ENCODE measurements at regions of chr22 and their contacts with region 1.

Region 1: GRCh38 chr22:38114484-38115398 is 4.3 kb upstream of the BAIAP2L2 start:
- DNase-seq: peak; percentile 93
- CTCF ChIP-seq: peak; percentile 83

Region 2: GRCh38 chr22:38228873-38229740 is 114.4 kb after region 1 on chr22:
- in situ Hi-C with region 1: loop called (anchors 10 kb)
- DNase-seq: no peak
- CTCF ChIP-seq: no peak

Measured in GM13976 (cell line).